Activated T-helper 1 cell treated with anti-CD3 and anti-CD28 coated beads, Interleukin-12 subunit alpha, Interleukin-12 subunit beta, Interleukin-2, Interleukin-4 antibody, amounts not matched to agents 30 ng/mL and 10 ng/mL and 1 ng/mL, durations not matched to agents 14 hours and 24 hours and 36 hours (primary cell): ENCODE measurements at regions of chr3 and their contacts with region 1.

Region 1: DNA sequence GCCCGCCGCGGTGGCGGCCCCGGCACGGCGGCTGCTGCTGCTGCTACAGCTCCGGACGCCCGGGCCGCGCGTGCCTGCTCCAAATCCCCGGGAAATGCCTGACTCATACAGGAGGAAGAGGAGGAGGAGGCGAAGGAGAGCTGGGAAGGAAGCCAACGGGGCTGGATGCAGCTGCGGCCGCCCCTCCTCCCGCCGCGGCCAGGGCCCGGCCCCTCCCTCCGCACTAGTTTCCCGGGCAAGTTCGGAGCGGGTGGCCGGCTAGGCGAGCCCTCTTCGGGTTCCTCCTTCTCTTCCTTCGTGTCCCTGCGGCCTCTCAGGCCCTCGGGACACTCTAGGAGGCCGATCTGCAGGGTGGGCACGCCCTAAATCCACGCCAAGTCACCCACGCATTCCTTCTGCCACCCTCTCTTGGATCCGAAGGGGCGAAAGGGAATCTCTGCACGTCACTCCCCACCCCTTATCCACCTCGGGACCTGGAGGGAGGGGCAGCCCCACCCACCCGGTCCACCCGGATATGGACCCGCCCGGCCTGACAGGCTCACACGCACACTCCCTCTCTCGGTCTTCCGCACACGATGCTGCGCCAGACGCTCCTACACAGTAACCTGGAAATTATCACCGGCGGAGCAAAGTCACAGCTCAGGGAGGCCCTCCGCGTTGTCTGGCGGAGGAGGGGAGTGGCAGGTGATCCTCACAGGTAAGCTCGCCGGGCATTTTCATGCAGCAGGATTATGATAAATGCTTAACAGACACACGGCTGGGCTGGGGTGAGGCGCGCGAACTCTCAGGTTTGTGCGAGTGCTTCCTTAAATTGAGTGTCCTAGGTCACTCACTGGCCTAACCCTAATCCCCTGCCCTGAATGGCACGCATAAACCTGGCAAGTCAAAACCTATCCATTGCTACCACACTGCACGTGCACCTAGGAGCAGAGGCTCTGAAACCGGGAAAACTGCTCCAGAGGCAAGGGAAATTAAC is at the starts of genes OSBPL10 and ZNF860:
- DNase-seq: peak; percentile 4
- H3K4me3 Mint-ChIP-seq: peak within 1 kb of the TSS; percentile 87
- H3K27ac Mint-ChIP-seq: peak within 1 kb of the TSS; percentile 62
- H3K4me1 Mint-ChIP-seq: peaks cover 27% of the 10 kb centered on the region
- H3K27me3 Mint-ChIP-seq: peaks cover 17% of the 10 kb centered on the region
- total RNA-seq, gene OSBPL10: 12.1 and 14.5 TPM in 2 replicates
- total RNA-seq, gene ZNF860: 0.34 and 0.81 TPM in 2 replicates

Region 2: DNA sequence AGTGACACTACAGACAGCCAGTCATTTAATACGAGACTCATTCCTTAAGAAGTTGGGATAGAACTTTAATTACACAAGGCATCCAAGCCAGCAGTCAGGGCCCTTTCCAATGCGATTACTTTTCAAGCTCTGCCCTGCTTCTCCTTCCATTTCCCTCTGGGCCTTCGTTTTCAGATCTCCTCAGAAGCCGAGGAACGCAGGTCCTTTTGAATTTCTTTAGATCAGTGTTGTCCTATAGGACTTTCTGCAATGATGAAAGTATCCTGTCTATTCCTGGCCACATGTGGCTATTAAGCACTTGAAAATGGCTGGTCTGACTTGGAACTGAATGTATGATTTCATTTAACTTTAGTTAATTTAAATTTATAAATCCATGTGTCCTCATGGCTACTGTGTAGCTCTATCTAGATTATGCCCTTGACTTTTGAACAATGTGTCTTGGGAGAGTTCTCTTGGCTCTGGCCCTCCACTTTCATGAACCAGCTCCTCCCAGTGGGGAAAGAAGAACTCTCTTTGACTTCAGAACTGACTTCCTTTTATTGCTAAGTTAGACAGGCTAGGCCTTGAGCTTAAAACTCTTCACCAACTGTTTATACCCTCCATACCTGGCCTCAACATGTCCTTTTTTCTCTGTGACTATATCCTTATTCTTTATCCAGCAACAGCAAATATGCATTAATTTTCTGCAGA is 1352.4 kb before region 1 on chr3:
- intact Hi-C with region 1: loop called (anchors 10 kb)
- DNase-seq: no peak
- H3K4me3 Mint-ChIP-seq: peak overlapping the region; percentile 66
- H3K27ac Mint-ChIP-seq: peak overlapping the region; percentile 98
- H3K4me1 Mint-ChIP-seq: peaks cover 83% of the 10 kb centered on the region
- H3K27me3 Mint-ChIP-seq: no peaks in the 10 kb centered on the region

Region 3: GRCh38 chr3:31253782-31254181 is 727.7 kb before region 1 on chr3:
- intact Hi-C with region 1: loop called (anchors 1 kb)
- DNase-seq: no peak
- H3K4me3 Mint-ChIP-seq: no peak overlapping the region
- H3K27ac Mint-ChIP-seq: peak overlapping the region; percentile 89
- H3K4me1 Mint-ChIP-seq: peaks cover 64% of the 10 kb centered on the region
- H3K27me3 Mint-ChIP-seq: peaks cover 3% of the 10 kb centered on the region

Region 4: DNA sequence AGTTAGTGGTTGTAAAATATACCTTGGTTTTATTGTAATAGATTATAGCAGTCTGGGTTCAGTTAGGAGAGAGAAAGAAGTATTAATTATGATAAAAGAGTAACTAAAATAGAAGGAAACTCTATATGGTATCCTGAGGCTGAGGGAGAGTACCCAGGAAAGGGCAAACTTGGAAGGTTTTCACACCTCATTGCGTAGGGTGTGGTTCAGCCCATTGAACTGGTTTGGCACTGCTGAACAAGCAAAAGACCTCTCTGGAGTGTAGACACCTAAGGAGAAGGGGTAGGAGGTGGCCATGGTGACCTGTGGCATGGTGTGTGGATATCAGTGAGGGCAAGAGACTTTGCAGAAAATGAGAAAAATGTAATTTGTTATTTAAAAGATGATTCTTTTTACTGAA is 385.3 kb before region 1 on chr3:
- intact Hi-C with region 1: no loop called
- DNase-seq: no peak
- H3K4me3 Mint-ChIP-seq: no peak overlapping the region
- H3K27ac Mint-ChIP-seq: peak overlapping the region; percentile 68
- H3K4me1 Mint-ChIP-seq: peaks cover 53% of the 10 kb centered on the region
- H3K27me3 Mint-ChIP-seq: no peaks in the 10 kb centered on the region

Region 5: DNA sequence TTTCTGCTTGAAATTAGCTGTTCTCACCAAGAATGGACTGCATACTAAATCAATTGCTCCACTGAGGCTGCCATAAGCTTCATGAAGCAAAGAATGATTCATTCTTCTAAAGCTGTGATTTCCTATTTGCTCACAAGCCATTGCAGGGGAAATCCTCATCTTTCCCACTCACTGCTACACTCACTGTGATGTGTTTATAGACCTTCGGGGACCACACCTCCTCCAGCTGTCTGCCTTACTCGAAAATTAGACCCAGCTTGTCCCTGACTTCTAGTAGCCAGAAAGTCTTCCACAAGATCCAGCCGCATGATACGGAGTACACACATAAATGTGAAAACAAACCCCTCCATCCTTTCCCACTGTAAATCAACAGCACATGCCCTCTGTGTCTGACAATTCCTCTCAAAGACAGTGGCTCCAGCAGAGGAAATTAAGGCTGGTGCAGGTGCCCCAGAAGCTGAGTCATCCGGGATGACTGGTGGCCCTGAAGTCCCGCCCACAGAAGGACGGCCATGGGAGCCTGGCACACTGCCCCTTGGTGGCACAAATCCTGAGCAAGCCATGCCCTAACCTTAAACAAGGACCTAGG is 276.8 kb before region 1 on chr3:
- intact Hi-C with region 1: loop called (anchors 1 kb)
- DNase-seq: no peak
- H3K4me3 Mint-ChIP-seq: peak overlapping the region; percentile 3
- H3K27ac Mint-ChIP-seq: peak overlapping the region; percentile 47
- H3K4me1 Mint-ChIP-seq: peaks cover 14% of the 10 kb centered on the region
- H3K27me3 Mint-ChIP-seq: no peaks in the 10 kb centered on the region

Region 6: DNA sequence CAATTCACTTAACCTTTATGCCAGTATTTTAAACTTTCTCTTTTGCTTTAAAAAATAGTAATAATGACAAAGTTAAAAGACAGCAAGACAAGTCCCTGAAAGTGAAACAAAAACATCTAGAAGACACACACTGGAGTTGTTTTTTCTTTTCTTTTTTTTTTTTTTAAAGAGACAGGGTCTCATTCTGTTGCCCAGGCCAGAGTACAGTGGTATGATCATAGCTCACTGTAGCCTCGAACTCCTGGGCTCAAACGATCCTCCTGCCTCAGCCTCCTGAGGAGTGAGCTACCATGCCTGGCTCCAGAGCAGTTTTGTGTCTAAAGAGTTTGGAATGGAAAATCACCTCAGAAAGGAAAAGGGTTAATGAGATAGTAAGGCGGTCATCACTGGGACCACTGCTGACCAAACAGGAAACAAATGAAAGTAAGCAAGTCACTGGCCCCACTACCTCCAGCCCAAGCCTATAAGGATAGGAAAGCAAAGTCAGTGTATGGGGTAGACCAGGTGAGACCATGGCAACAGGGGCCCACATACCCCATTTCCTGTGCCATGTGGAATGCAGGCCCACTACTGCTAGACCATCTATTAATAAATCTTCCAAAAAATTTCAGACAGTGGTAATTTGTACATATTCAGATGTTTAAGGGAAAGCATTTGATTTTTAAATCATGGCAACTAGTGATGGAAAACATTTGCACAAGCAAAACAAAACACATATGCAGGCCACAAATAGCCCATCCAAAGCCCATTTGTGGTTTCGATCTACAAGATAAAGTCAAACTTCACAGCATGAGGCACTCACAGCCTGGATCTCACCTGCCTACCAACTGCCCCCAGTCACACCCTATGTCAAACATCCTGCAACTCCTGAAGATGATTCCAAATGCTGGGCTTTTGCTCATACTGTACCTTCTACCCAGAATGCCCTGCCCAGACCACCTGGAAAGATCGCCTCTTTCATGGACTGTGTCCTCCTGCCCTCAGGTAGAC is 63.0 kb before region 1 on chr3:
- intact Hi-C with region 1: loop called (anchors 1 kb)
- DNase-seq: peak; percentile 4
- H3K4me3 Mint-ChIP-seq: peak overlapping the region; percentile 68
- H3K27ac Mint-ChIP-seq: peak overlapping the region; percentile 85
- H3K4me1 Mint-ChIP-seq: peaks cover 37% of the 10 kb centered on the region
- H3K27me3 Mint-ChIP-seq: no peaks in the 10 kb centered on the region

Region 7: GRCh38 chr3:31993843-31994242 is 12.3 kb after region 1 on chr3:
- intact Hi-C with region 1: loop called (anchors 2 kb)
- DNase-seq: no peak
- H3K4me3 Mint-ChIP-seq: no peak overlapping the region
- H3K27ac Mint-ChIP-seq: no peak overlapping the region
- H3K4me1 Mint-ChIP-seq: peaks cover 6% of the 10 kb centered on the region
- H3K27me3 Mint-ChIP-seq: no peaks in the 10 kb centered on the region